ENCODE measurements at regions of chr16 and their contacts with region 1.

Region 1: DNA sequence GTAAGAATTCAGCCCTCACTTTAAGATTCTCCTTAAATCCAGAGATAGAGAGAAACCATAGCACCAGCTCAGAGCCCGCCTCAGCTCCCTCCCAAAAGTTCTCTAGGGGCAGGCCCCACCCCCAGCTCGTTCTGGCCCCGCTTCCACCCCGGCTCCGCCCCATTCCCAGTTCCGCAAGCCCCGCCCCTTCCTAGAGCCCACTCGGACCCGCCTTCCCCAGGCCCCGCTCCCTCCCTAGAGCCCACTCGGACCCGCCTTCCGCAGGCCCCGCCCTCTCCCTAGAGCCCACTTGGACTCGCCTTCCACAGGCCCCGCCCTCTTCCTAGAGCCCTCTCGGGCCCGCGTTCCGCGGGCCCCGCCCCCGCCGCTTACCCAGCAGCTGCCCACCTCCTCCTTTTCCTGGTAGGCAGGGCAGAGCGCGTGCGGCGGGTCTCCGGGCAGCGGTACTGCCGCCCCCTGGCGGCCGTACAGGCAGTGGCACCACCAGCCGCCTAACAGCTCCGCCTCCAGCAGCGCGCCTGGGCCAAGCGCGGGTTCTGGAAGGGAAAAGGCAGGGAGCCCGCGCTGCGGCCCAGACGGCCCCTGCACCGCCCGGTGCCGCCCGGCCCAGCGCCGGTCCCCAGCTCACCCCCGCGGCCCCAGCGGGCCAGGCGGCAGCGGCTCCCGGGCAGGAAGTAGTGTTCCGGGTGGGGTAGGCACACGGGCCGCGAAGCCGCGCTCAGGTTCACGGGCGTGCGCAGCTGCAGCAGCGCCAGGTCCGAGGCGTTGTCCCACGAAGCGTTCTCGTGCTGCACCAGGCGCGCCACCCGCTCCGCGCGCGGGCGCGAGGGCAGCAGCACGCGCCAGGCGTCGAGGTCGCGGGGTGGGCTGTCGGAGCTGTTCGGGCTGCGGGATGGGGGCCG is 6.8 kb upstream of the PRSS8 start:
- DNase-seq: peak; percentile 91 to 98 (median 95)
- ATAC-seq: peak; percentile 95
- H3K4me3 ChIP-seq: peak overlapping the region; percentile 68
- H3K4me3 Mint-ChIP-seq: peak overlapping the region; percentile 61 to 84 (median 72)
- H3K27ac ChIP-seq: peak overlapping the region; percentile 74
- H3K27ac Mint-ChIP-seq: peak overlapping the region; percentile 73 to 94 (median 84)
- H3K4me1 ChIP-seq: peaks cover 6 to 14% of the 10 kb centered on the region in 2 donors
- H3K4me1 Mint-ChIP-seq: peaks cover 0 to 17% (median 14%) of the 10 kb centered on the region in 7 donors
- H3K27me3 ChIP-seq: no peaks in the 10 kb centered on the region
- H3K27me3 Mint-ChIP-seq: peaks cover 0 to 3% (median 0%) of the 10 kb centered on the region in 5 donors

Region 2: DNA sequence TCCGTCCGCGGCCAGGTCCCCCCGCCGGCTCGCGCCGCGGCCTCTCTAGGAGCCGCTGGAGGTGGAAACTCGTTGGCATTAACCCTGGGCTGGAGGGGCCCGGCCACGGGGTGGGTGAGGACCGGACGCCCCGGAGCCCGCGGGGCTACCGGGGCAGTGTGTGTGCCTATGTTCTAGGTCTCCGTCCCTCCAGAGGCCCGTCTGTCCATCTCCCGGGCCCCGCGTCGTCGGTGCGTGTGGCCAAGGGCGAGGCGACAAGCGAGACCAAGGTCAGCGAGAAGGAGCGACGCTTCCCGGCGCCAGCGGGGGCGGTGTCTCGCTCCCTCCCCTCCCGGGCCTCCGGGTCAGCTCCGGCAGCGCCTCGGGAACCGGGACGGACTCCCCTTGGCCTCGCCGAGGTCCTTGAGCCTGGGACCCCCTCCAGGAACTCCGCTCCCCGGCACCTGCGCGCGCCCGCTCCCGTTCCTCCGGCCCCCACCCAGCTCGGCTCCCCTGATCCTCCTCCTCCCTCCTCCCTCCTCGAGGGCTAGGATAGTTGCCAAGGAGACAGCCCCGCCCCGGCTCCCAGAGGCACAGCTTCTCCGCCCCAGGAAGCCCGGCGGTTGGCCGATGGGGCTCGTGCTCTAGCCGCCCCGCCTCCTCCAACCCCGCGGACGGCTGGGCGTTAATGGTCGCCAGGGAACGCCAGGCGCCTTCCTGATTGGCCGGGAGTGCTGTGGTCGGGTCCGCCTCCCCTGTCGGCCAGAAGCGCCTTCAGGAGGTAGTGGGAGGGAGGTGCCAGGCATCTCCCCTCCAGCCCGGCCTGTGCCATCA is 615.3 kb before region 1 on chr16:
- CTCF ChIA-PET with region 1: no interaction called
- POLR2A ChIA-PET with region 1: no interaction called
- intact Hi-C with region 1: no loop called
- DNase-seq: peak; percentile 59 to 95 (median 64)
- ATAC-seq: peak; percentile 87
- H3K4me3 ChIP-seq: peak overlapping the region; percentile 75
- H3K4me3 Mint-ChIP-seq: peak overlapping the region; percentile 78 to 92 (median 88)
- H3K27ac ChIP-seq: peak overlapping the region; percentile 76
- H3K27ac Mint-ChIP-seq: peak overlapping the region; percentile 82 to 94 (median 88)
- H3K4me1 ChIP-seq: peaks cover 0 to 10% of the 10 kb centered on the region in 2 donors
- H3K4me1 Mint-ChIP-seq: peaks cover 16 to 39% (median 32%) of the 10 kb centered on the region in 7 donors
- H3K27me3 ChIP-seq: no peaks in the 10 kb centered on the region
- H3K27me3 Mint-ChIP-seq: no peaks in the 10 kb centered on the region

Region 3: GRCh38 chr16:30984669-30985400 is 157.5 kb before region 1 on chr16 and contains the start of gene HSD3B7:
- CTCF ChIA-PET with region 1: interaction called, 5 read pairs
- POLR2A ChIA-PET with region 1: no interaction called
- intact Hi-C with region 1: loop called (anchors 1 kb)
- DNase-seq: peak; percentile 54 to 91 (median 72)
- ATAC-seq: peak; percentile 86
- H3K4me3 ChIP-seq: no peak within 1 kb of the TSS
- H3K4me3 Mint-ChIP-seq: peak within 1 kb of the TSS in 3 of 10 donors; percentile 39 to 54 (median 51)
- H3K27ac ChIP-seq: no peak within 1 kb of the TSS
- H3K27ac Mint-ChIP-seq: peak within 1 kb of the TSS in 2 of 9 donors; percentile 29 to 62
- H3K4me1 ChIP-seq: no peaks in the 10 kb centered on the region
- H3K4me1 Mint-ChIP-seq: peaks cover 0 to 17% (median 0%) of the 10 kb centered on the region in 7 donors
- H3K27me3 ChIP-seq: no peaks in the 10 kb centered on the region
- H3K27me3 Mint-ChIP-seq: no peaks in the 10 kb centered on the region
- total RNA-seq, gene HSD3B7: 0.66 to 7.0 (median 3.3) TPM

Region 4: DNA sequence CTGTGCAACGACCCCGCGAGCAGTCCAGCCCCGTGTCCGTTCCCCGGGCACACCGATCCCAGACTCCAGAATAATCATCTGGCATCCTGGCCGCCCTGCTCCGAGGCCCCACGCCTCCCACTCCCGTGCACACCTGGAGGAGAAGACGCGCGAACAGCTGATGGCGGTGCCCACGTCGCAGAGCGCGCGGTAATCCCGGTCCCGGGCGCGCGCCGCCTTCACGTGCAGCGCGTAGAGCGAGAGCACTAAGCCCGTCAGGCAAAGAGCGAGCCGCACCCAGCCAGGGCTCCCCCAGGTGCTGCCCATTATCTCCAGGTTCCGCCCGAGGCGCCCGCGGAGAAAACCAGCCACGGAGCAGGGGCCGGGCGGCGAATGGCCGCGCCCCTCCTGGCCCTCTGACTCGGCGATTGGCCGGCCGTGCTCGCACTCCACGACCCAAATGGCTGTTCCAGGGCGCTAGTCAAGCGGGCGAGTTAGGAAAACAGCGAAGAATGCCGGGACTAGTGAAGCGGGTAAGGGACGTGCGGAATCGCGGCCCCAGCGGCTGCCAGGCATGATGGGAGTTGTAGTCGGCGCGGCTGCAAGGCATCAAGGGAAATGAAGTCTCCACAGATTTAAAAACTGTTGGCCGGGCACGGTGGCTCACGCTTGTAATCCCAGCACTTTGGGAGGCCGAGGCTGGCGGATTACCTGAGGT is 47.8 kb before region 1 on chr16 and contains the start of gene VKORC1:
- CTCF ChIA-PET with region 1: no interaction called
- POLR2A ChIA-PET with region 1: interaction called, 5 read pairs
- intact Hi-C with region 1: loop called (anchors 1 kb)
- DNase-seq: peak; percentile 66 to 89 (median 88)
- ATAC-seq: peak; percentile 93
- H3K4me3 ChIP-seq: peak within 1 kb of the TSS; percentile 99
- H3K4me3 Mint-ChIP-seq: peak within 1 kb of the TSS; percentile 92 to 99 (median 94)
- H3K27ac ChIP-seq: peak within 1 kb of the TSS; percentile 85
- H3K27ac Mint-ChIP-seq: peak within 1 kb of the TSS; percentile 67 to 95 (median 91)
- H3K4me1 ChIP-seq: peaks cover 14 to 18% of the 10 kb centered on the region in 2 donors
- H3K4me1 Mint-ChIP-seq: peaks cover 14 to 42% (median 29%) of the 10 kb centered on the region in 7 donors
- H3K27me3 ChIP-seq: no peaks in the 10 kb centered on the region
- H3K27me3 Mint-ChIP-seq: no peaks in the 10 kb centered on the region
- total RNA-seq, gene VKORC1: 29.5 to 69.3 (median 35.6) TPM

Region 5: GRCh38 chr16:31117391-31118197 is 24.8 kb before region 1 on chr16 and contains the start of gene KAT8:
- CTCF ChIA-PET with region 1: interaction called, 14 read pairs
- POLR2A ChIA-PET with region 1: interaction called, 87 read pairs
- intact Hi-C with region 1: loop called (anchors 1 kb)
- DNase-seq: peak; percentile 88 to 99 (median 97)
- ATAC-seq: peak; percentile 95
- H3K4me3 ChIP-seq: peak within 1 kb of the TSS; percentile 65
- H3K4me3 Mint-ChIP-seq: peak within 1 kb of the TSS; percentile 86 to 95 (median 90)
- H3K27ac ChIP-seq: peak within 1 kb of the TSS; percentile 98
- H3K27ac Mint-ChIP-seq: peak within 1 kb of the TSS; percentile 77 to 96 (median 89)
- H3K4me1 ChIP-seq: peaks cover 7 to 15% of the 10 kb centered on the region in 2 donors
- H3K4me1 Mint-ChIP-seq: peaks cover 12 to 32% (median 24%) of the 10 kb centered on the region in 7 donors
- H3K27me3 ChIP-seq: no peaks in the 10 kb centered on the region
- H3K27me3 Mint-ChIP-seq: no peaks in the 10 kb centered on the region
- total RNA-seq, gene KAT8: 63.0 to 134 (median 112) TPM

Region 6: GRCh38 chr16:31179747-31180459 is 37.5 kb after region 1 on chr16 and contains the start of gene FUS:
- CTCF ChIA-PET with region 1: interaction called, 27 read pairs
- POLR2A ChIA-PET with region 1: interaction called, 183 read pairs
- intact Hi-C with region 1: loop called (anchors 1 kb)
- DNase-seq: peak; percentile 88 to 97 (median 95)
- ATAC-seq: peak; percentile 87
- H3K4me3 ChIP-seq: peak within 1 kb of the TSS; percentile 76
- H3K4me3 Mint-ChIP-seq: peak within 1 kb of the TSS; percentile 92 to 99 (median 96)
- H3K27ac ChIP-seq: peak within 1 kb of the TSS; percentile 90
- H3K27ac Mint-ChIP-seq: peak within 1 kb of the TSS; percentile 96 to 100 (median 99)
- H3K4me1 ChIP-seq: peaks cover 56% of the 10 kb centered on the region in 2 donors
- H3K4me1 Mint-ChIP-seq: peaks cover 49 to 72% (median 56%) of the 10 kb centered on the region in 7 donors
- H3K27me3 ChIP-seq: no peaks in the 10 kb centered on the region
- H3K27me3 Mint-ChIP-seq: peaks cover 0 to 3% (median 0%) of the 10 kb centered on the region in 5 donors
- total RNA-seq, gene FUS: 597 to 956 (median 714) TPM

Region 7: DNA sequence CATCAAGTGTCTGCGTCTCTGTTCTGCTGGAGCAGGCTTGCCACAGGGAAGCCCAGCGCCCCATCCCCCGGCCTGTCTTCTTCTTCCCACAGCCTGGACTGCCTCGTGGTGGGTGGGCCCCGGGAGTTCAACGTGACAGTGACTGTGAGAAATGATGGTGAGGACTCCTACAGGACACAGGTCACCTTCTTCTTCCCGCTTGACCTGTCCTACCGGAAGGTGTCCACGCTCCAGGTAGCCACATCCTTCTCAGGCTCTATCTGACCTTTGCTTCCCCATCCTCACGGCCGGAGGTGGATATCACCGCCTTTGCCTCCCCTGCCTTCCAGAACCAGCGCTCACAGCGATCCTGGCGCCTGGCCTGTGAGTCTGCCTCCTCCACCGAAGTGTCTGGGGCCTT is 182.8 kb after region 1 on chr16:
- CTCF ChIA-PET with region 1: no interaction called
- POLR2A ChIA-PET with region 1: no interaction called
- intact Hi-C with region 1: no loop called
- DNase-seq: no peak
- ATAC-seq: no peak
- H3K4me3 ChIP-seq: no peak overlapping the region
- H3K4me3 Mint-ChIP-seq: no peak overlapping the region
- H3K27ac ChIP-seq: no peak overlapping the region
- H3K27ac Mint-ChIP-seq: no peak overlapping the region
- H3K4me1 ChIP-seq: no peaks in the 10 kb centered on the region
- H3K4me1 Mint-ChIP-seq: peaks cover 3 to 12% (median 5%) of the 10 kb centered on the region in 7 donors
- H3K27me3 ChIP-seq: no peaks in the 10 kb centered on the region
- H3K27me3 Mint-ChIP-seq: peaks cover 0 to 10% (median under 1%) of the 10 kb centered on the region in 5 donors

Measured in naive thymus-derived CD4-positive, alpha-beta T cell (primary cell).